CD14-positive monocyte (primary cell): ENCODE measurements at regions of chr13 and their contacts with region 1.

Region 1: GRCh38 chr13:110715395-110716235 is 2.1 kb downstream of the ING1 start:
- DNase-seq: peak; percentile 99
- H3K4me3 ChIP-seq: peak overlapping the region; percentile 62 to 100 (median 99)
- H3K4me3 Mint-ChIP-seq: peak overlapping the region; percentile 96
- H3K27ac ChIP-seq: peak overlapping the region; percentile 82 to 91
- H3K27ac Mint-ChIP-seq: peak overlapping the region; percentile 90 to 97 (median 95)
- H3K4me1 ChIP-seq: peaks cover 28 to 34% of the 10 kb centered on the region in 2 donors
- H3K4me1 Mint-ChIP-seq: peaks cover 33% of the 10 kb centered on the region
- H3K27me3 ChIP-seq: no peaks in the 10 kb centered on the region
- H3K27me3 Mint-ChIP-seq: peaks cover 0 to 4% (median 2%) of the 10 kb centered on the region in 3 donors
- CTCF ChIP-seq: no peak

Region 2: GRCh38 chr13:110525328-110526319 is 190.0 kb before region 1 on chr13:
- intact Hi-C with region 1: loop called in 1 of 2 experiments (anchors 10 kb)
- DNase-seq: no peak
- H3K4me3 ChIP-seq: no peak overlapping the region
- H3K4me3 Mint-ChIP-seq: no peak overlapping the region
- H3K27ac ChIP-seq: no peak overlapping the region
- H3K27ac Mint-ChIP-seq: peak overlapping the region in 2 of 7 donors; percentile 42 to 71
- H3K4me1 ChIP-seq: peaks cover 76 to 89% of the 10 kb centered on the region in 2 donors
- H3K4me1 Mint-ChIP-seq: peaks cover 90% of the 10 kb centered on the region
- H3K27me3 ChIP-seq: no peaks in the 10 kb centered on the region
- H3K27me3 Mint-ChIP-seq: peaks cover 0 to 8% (median 0%) of the 10 kb centered on the region in 3 donors
- CTCF ChIP-seq: no peak

Region 3: DNA sequence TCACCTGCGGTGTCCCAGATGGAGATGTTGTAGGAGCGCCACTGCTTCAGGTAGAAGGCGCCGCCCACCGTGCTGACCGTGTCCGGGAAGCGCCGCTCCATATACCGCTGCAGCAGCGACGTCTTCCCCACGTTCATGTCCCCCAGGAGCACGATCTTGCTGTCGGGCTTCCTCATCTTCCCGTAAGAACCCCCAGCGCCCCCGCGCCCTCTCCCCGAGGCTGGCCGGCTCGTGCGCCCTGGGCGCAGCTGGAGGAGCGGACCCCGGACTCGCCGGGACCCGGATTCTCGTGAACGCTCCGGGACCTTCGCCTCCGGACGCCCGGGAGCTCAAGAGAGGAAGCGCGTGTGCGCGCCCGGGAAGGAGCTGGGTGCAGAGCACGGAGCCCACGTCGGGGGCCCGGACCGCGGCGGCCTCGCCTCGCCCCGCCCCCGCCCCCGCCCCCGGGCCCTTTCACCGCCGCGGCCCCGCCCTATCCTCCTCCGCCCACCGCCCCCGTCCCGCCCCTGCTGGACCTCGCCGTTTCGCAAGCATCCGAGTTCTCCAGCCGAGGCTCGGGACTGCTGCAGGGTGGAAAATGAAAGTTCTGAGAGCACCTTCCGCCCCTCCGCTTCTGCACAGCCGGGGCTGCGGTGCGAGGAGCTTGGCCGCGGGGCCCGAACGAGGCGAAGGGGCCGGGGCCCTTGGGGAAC is 154.1 kb before region 1 on chr13 and contains the start of gene RAB20:
- intact Hi-C with region 1: loop called (anchors 2 to 10 kb)
- DNase-seq: peak; percentile 77 to 89 (median 89)
- H3K4me3 ChIP-seq: peak within 1 kb of the TSS; percentile 71 to 93 (median 89)
- H3K4me3 Mint-ChIP-seq: peak within 1 kb of the TSS; percentile 99
- H3K27ac ChIP-seq: peak within 1 kb of the TSS; percentile 87 to 92
- H3K27ac Mint-ChIP-seq: peak within 1 kb of the TSS; percentile 93 to 97 (median 95)
- H3K4me1 ChIP-seq: peaks cover 29 to 64% of the 10 kb centered on the region in 2 donors
- H3K4me1 Mint-ChIP-seq: peaks cover 59% of the 10 kb centered on the region
- H3K27me3 ChIP-seq: no peaks in the 10 kb centered on the region
- H3K27me3 Mint-ChIP-seq: peaks cover 0 to 3% (median 1%) of the 10 kb centered on the region in 3 donors
- CTCF ChIP-seq: no peak
- polyA plus RNA-seq, gene RAB20: 37.8 to 77.5 (median 43.1) TPM

Region 4: DNA sequence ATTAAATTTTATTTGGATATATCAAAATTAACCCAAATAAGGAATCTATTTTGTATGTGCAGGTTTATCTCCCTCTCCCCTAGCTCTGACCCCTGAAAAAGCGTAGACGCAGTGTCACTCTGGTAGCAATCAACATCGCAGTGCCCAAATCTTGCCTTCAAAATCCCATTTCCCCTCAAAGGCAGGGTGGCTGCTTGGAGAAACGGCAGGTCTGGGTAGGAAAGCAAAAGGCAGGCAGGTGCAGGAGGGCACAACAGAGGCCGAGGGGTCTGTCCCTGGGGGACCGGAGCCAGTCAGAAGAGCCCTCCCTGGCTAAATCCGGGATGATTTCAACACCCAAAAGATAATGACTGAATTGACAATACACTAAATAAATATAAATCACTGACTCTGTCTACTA is 58.4 kb before region 1 on chr13:
- intact Hi-C with region 1: loop called (anchors 5 kb)
- DNase-seq: no peak
- H3K4me3 ChIP-seq: peak overlapping the region in 1 of 3 experiments; percentile 64
- H3K4me3 Mint-ChIP-seq: peak overlapping the region in 1 of 2 donors; percentile 72
- H3K27ac ChIP-seq: peak overlapping the region; percentile 89 to 92
- H3K27ac Mint-ChIP-seq: peak overlapping the region; percentile 89 to 96 (median 95)
- H3K4me1 ChIP-seq: peaks cover 48 to 55% of the 10 kb centered on the region in 2 donors
- H3K4me1 Mint-ChIP-seq: peaks cover 62% of the 10 kb centered on the region
- H3K27me3 ChIP-seq: no peaks in the 10 kb centered on the region
- H3K27me3 Mint-ChIP-seq: no peaks in the 10 kb centered on the region
- CTCF ChIP-seq: no peak

Region 5: DNA sequence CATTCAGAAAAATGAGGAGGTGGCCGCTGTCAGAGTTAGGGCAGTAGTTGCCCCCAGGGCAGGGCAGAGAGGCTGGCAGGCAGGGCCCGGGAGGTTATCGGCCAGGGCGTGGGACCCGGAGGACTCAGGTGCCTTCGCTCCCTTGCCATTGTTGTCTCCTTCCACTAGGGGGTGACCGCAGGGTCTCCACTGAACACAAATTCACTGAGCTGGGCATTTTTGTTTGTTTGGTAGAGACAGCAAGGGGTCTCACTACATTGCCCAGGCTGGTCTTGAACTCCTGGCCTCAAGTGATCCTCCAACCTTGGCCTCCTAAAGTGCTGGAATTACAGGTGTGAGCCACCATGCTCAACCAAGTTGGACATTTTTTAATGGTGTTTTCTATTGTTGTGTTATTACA is 34.8 kb before region 1 on chr13:
- intact Hi-C with region 1: loop called in 1 of 2 experiments (anchors 5 kb)
- DNase-seq: no peak
- H3K4me3 ChIP-seq: no peak overlapping the region
- H3K4me3 Mint-ChIP-seq: no peak overlapping the region
- H3K27ac ChIP-seq: peak overlapping the region in 1 of 2 donors; percentile 58
- H3K27ac Mint-ChIP-seq: peak overlapping the region in 6 of 7 donors; percentile 5 to 65 (median 42)
- H3K4me1 ChIP-seq: peaks cover 19 to 21% of the 10 kb centered on the region in 2 donors
- H3K4me1 Mint-ChIP-seq: peaks cover 25% of the 10 kb centered on the region
- H3K27me3 ChIP-seq: no peaks in the 10 kb centered on the region
- H3K27me3 Mint-ChIP-seq: no peaks in the 10 kb centered on the region
- CTCF ChIP-seq: peak; percentile 37

Region 6: GRCh38 chr13:110915057-110915873 is 199.7 kb after region 1 on chr13 and contains the start of gene ANKRD10:
- intact Hi-C with region 1: loop called (anchors 2 to 10 kb)
- DNase-seq: peak; percentile 98 to 99 (median 98)
- H3K4me3 ChIP-seq: peak within 1 kb of the TSS; percentile 86 to 96 (median 89)
- H3K4me3 Mint-ChIP-seq: peak within 1 kb of the TSS; percentile 90 to 92
- H3K27ac ChIP-seq: peak within 1 kb of the TSS; percentile 98 to 100
- H3K27ac Mint-ChIP-seq: peak within 1 kb of the TSS; percentile 96 to 100 (median 99)
- H3K4me1 ChIP-seq: peaks cover 27 to 28% of the 10 kb centered on the region in 2 donors
- H3K4me1 Mint-ChIP-seq: peaks cover 31% of the 10 kb centered on the region
- H3K27me3 ChIP-seq: no peaks in the 10 kb centered on the region
- H3K27me3 Mint-ChIP-seq: peaks cover 2 to 7% (median 3%) of the 10 kb centered on the region in 3 donors
- CTCF ChIP-seq: peak; percentile 82
- polyA plus RNA-seq, gene ANKRD10: 30.5 to 79.9 (median 37.2) TPM

Region 7: DNA sequence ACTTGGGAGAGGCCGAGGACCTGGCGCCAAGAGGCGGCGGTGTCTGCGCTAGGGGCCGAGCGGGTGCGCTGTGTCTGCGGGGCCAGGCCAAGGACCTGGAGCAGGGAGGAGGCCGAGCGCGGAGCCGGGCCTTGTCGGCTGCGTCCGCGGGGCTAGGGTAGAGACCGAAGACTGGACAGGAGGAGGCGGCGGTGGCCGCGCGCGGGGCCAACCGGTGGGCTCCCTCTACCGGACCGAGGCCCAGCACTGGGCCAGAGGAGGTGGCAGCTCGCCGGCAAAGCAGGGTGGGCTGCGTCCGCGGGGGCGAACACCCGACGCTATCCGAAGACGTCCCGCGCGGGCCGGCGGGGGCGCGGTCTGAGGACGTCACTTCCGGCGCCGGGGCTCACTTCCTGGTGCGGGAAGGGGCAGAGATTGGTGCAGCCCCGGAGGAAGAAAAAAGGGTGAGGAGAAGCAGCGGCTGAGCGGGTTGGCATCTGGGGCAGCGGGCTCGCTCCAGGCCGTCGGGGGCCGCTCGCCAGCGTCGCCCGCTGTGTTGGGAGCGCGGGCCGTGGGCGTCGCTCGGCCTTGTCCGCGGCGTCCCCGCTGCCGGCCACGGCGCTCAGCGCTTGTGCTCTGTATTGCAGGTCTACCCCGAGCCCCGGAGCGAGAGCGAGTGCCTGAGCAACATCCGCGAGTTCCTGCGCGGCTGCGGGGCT is 437.8 kb after region 1 on chr13:
- intact Hi-C with region 1: loop called (anchors 5 to 10 kb)
- DNase-seq: peak; percentile 83 to 91 (median 89)
- H3K4me3 ChIP-seq: peak overlapping the region; percentile 63 to 92 (median 77)
- H3K4me3 Mint-ChIP-seq: peak overlapping the region; percentile 87 to 88
- H3K27ac ChIP-seq: peak overlapping the region; percentile 82 to 92
- H3K27ac Mint-ChIP-seq: peak overlapping the region; percentile 90 to 96 (median 93)
- H3K4me1 ChIP-seq: peaks cover 16 to 23% of the 10 kb centered on the region in 2 donors
- H3K4me1 Mint-ChIP-seq: peaks cover 24% of the 10 kb centered on the region
- H3K27me3 ChIP-seq: peaks cover 9 to 22% of the 10 kb centered on the region in 2 donors
- H3K27me3 Mint-ChIP-seq: peaks cover 12 to 24% (median 14%) of the 10 kb centered on the region in 3 donors
- CTCF ChIP-seq: peak; percentile 33